AG04450 (cell line): ENCODE measurements at regions of chr16 and their contacts with region 1.

Region 1: DNA sequence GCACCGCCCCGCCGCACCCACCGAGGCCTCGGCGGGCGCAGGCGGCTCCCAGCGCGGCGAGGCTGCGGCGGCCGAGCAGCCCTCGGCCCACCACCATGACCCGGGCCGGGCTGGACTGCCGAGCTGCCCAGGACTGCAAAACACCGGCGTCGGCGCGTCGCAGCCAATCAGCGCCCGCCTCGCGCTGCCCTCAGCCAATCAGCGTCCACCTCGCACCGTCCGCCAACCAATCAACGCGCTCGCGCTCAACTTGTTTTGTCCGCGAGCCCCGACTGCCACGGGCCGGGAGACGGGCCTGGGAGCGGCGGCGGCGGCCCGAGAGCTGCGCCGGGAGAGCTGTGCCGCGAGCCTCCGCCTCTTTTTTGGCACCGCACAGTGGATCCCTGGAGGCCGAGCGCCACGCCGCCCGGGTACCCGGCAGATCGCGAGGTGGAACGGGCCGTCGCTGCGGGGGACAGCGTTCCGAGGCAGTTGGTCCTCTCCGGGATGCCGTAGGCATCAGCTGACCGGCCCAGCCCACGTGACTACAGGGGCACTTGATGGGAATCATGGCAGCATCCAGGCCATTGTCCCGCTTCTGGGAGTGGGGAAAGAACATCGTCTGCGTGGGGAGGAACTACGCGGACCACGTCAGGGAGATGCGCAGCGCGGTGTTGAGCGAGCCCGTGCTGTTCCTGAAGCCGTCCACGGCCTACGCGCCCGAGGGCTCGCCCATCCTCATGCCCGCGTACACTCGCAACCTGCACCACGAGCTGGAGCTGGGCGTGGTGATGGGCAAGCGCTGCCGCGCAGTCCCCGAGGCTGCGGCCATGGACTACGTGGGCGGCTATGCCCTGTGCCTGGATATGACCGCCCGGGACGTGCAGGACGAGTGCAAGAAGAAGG is at the starts of genes FAHD1 and HAGH:
- DNase-seq: peak; percentile 91
- H3K4me3 ChIP-seq: peak within 1 kb of the TSS; percentile 96
- H3K27ac ChIP-seq: peak within 1 kb of the TSS; percentile 39
- H3K27me3 ChIP-seq: no peaks in the 10 kb centered on the region
- CTCF ChIP-seq: no peak
- polyA plus RNA-seq, gene FAHD1: 35.2 and 45.4 TPM in 2 replicates
- polyA plus RNA-seq, gene HAGH: 11.8 and 16.2 TPM in 2 replicates

Region 2: DNA sequence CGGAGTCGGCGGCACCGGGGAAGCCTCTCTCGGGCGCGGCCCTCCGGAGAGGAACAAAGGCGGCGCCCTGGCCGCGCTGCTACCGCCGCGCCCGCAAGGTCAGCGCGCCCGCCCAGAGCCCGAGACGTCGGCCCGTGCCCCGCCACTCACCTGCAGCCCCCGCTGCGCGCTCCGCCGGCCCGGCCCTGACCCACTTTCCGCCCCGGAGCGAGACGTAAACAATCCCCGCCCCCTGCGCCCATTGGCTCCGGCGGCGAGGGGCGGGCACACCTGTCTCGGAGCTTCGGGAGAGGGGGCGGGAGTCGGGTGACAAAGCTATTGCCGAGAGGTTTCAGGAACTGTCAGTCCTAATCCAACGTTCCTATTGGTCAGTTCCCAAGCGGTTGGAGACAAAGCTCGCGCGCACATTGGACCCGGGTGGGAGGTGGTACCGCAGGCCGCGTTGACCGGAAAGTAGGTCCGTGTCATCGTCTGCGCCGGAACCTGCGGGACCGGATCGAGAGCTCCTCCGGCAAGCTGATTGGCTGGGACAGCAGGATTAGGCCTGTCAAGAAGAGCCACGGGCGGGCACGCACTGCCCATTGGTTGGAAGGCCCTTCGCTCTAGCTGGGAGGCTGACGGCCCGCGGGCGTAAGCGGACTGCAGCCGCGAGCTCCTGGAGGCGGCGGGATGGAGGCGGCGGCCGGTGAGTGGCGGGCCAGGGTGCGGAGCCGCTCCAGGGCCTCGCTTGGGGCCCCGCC is 44.4 kb before region 1 on chr16 and contains the starts of genes NUBP2 and SPSB3:
- CTCF ChIA-PET with region 1: no interaction called
- POLR2A ChIA-PET with region 1: interaction called, 21 read pairs
- DNase-seq: peak; percentile 100
- H3K4me3 ChIP-seq: peak within 1 kb of the TSS; percentile 80
- H3K27ac ChIP-seq: peak within 1 kb of the TSS; percentile 21
- H3K27me3 ChIP-seq: no peaks in the 10 kb centered on the region
- CTCF ChIP-seq: no peak
- polyA plus RNA-seq, gene NUBP2: 20.0 and 29.2 TPM in 2 replicates
- polyA plus RNA-seq, gene SPSB3: 11.0 and 13.3 TPM in 2 replicates